Activated CD4-positive, alpha-beta memory T cell treated with anti-CD3 and anti-CD28 coated beads, Interleukin-2, amount 10 ng/mL, durations not matched to agents 7 days and 5 days (primary cell): ENCODE measurements at regions of chr4 and their contacts with region 1.

Region 1: DNA sequence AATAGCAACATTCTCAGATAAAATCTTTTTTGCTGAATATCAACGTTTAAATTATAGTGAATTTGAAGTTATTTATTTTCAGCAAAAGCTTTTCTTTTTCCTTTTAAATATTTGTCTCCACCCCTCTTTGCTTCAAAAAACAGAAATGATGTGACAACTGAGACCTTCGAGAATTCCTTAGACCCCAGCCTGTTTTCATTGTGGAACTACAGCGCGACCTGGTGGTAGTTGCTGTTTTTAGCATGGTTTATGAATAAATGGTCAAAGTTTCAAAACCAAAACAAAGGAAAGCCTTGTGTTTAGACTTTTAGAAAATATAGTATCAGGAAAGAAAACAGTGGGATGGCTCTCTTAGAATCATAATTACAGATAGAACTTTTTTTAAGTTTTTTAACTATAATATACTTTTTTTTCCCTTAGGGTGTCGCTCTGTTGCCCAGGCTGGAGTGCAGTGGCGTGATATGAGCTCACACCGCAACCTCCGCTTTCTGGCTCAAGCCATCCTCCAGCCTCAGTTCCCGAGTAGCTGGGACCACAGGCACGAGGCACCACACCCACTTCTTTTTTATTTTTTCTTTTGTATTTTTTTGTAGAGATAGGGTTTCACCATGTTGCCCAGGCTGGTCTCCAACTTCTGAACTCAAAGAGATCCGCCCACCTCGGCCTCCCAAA is 26.8 kb upstream of the TMEM184C start:
- DNase-seq: peak; percentile 48
- H3K4me3 Mint-ChIP-seq: no peak overlapping the region
- H3K27ac Mint-ChIP-seq: no peak overlapping the region
- H3K4me1 Mint-ChIP-seq: peaks cover 5% of the 10 kb centered on the region
- H3K27me3 Mint-ChIP-seq: peaks cover 14% of the 10 kb centered on the region

Region 2: GRCh38 chr4:147160908-147161513 is 429.4 kb before region 1 on chr4:
- CTCF ChIA-PET with region 1: interaction called, 14 read pairs
- POLR2A ChIA-PET with region 1: no interaction called
- DNase-seq: no peak
- H3K4me3 Mint-ChIP-seq: no peak overlapping the region
- H3K27ac Mint-ChIP-seq: no peak overlapping the region
- H3K4me1 Mint-ChIP-seq: peaks cover 2% of the 10 kb centered on the region
- H3K27me3 Mint-ChIP-seq: peaks cover 18% of the 10 kb centered on the region

Region 3: GRCh38 chr4:147518846-147519767 is 71.3 kb before region 1 on chr4:
- CTCF ChIA-PET with region 1: interaction called, 36 read pairs
- POLR2A ChIA-PET with region 1: interaction called, 4 read pairs
- DNase-seq: peak; percentile 57
- H3K4me3 Mint-ChIP-seq: no peak overlapping the region
- H3K27ac Mint-ChIP-seq: no peak overlapping the region
- H3K4me1 Mint-ChIP-seq: no peaks in the 10 kb centered on the region
- H3K27me3 Mint-ChIP-seq: peaks cover 18% of the 10 kb centered on the region